ENCODE measurements at regions of chr11 and their contacts with region 1.

Region 1: DNA sequence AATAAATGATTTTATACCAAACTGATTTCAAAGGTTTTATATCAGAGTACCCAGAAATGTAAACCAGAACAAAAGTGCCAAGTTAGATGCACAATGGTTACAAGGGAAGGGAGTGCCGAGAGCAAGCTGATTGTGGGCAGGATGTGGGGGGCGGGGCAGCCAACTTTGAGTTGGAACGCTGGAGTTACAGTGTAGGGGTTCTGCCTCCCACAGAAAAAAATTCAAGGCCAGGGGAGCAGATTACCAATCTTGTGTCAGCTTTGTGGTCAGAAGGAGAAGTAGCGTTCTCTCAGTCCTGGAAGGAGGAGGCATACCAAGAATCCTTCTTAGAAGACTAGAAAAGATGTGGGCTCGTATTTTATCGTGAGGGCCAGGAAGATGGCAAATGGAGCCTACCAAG is 15.9 kb upstream of the POU2AF2 start:
- DNase-seq: no peak
- ATAC-seq: no peak
- H3K4me3 ChIP-seq: no peak overlapping the region
- H3K27ac ChIP-seq: no peak overlapping the region
- H3K4me1 ChIP-seq: no peaks in the 10 kb centered on the region
- H3K27me3 ChIP-seq: no peaks in the 10 kb centered on the region
- CTCF ChIP-seq: no peak

Region 2: DNA sequence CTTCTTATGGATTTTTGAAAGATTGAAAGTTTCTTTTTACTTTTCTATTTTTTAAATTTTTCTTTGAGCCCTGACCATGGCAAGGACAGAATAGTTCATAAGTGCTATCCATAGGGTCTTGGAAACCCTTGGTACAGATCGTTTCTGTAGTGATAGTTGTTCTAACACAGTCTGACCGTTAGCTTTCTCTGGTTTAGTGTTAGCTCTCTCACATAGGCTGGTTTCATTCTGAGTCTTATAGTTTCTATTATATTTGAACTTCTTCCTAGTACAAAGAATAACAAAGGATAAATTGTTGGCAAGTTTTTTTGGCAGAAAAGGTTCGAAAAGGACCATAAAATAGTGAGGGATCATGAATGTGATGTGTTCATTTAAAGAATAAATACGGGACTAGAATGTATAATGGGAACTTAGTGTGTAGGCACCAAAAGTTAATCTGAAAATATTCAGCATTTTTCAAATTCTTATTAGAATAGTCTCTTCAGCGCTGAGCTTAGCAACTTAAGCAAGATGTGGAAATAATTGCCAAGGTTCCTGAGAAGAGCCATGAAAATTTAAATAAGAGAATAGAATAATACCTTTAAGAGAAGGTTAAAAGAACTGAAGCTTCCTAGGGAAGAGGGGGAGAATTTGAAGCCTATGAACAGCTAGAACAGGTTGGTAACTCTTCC is 775.8 kb before region 1 on chr11:
- intact Hi-C with region 1: loop called in 1 of 3 experiments (anchors 10 kb)
- DNase-seq: no peak
- ATAC-seq: no peak
- H3K4me3 ChIP-seq: no peak overlapping the region
- H3K27ac ChIP-seq: no peak overlapping the region
- H3K4me1 ChIP-seq: no peaks in the 10 kb centered on the region
- H3K27me3 ChIP-seq: no peaks in the 10 kb centered on the region
- CTCF ChIP-seq: no peak

Measured in pancreas (tissue), 10 donors.